ENCODE measurements at regions of chr3 and their contacts with region 1.

Region 1: GRCh38 chr3:50272911-50273693 is 4.2 kb downstream of the SEMA3B start:
- DNase-seq: peak; percentile 81 to 92 (median 89)
- H3K4me3 ChIP-seq: peak overlapping the region; percentile 0 to 69 (median 48)
- H3K27ac ChIP-seq: peak overlapping the region; percentile 65 to 100 (median 100)
- H3K27me3 ChIP-seq: peaks cover 0 to 35% (median 14%) of the 10 kb centered on the region in 45 donors
- CTCF ChIP-seq: peak; percentile 97 to 100 (median 99)

Region 2: GRCh38 chr3:50121416-50122032 is 151.6 kb before region 1 on chr3:
- intact Hi-C with region 1: loop called in 1 of 2 experiments (anchors 5 kb)
- DNase-seq: peak; percentile 57 to 83 (median 79)
- H3K4me3 ChIP-seq: no peak overlapping the region
- H3K27ac ChIP-seq: peak overlapping the region in 30 of 59 donors; percentile 3 to 75 (median 50)
- H3K27me3 ChIP-seq: no peaks in the 10 kb centered on the region
- CTCF ChIP-seq: peak; percentile 72 to 95 (median 88)

Region 3: DNA sequence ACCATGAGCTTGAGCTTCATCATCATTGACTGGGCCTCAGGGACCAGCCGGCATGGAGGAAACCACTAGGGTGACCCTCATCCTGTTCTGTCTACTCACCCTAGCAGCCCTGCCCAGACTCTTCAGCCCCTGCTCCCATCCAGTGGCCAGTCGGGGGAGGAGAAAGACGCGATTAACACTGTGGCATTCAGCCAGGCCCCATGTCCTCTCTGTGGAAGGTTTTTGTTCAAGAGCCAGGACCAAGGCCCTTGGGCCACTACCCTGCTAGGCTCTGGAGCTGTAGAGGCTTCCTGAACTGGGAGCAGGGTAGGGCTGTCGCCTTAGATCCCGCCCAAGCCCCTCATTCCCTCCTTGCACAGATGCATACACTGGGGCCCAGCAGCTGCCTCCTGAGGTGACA is 53.0 kb before region 1 on chr3:
- intact Hi-C with region 1: no loop called
- DNase-seq: no peak
- H3K4me3 ChIP-seq: no peak overlapping the region
- H3K27ac ChIP-seq: peak overlapping the region in 31 of 59 donors; percentile 4 to 80 (median 57)
- H3K27me3 ChIP-seq: no peaks in the 10 kb centered on the region
- CTCF ChIP-seq: no peak

Region 4: GRCh38 chr3:50259432-50260026 is 13.6 kb before region 1 on chr3:
- intact Hi-C with region 1: loop called in 1 of 2 experiments (anchors 2 kb)
- DNase-seq: no peak
- H3K4me3 ChIP-seq: peak overlapping the region in 52 of 59 donors; percentile 2 to 78 (median 68)
- H3K27ac ChIP-seq: peak overlapping the region; percentile 98 to 100 (median 100)
- H3K27me3 ChIP-seq: no peaks in the 10 kb centered on the region
- CTCF ChIP-seq: no peak

Region 5: GRCh38 chr3:50321336-50322114 is 48.4 kb after region 1 on chr3:
- intact Hi-C with region 1: loop called (anchors 1 kb)
- DNase-seq: peak; percentile 80 to 92 (median 90)
- H3K4me3 ChIP-seq: peak overlapping the region; percentile 61 to 98 (median 84)
- H3K27ac ChIP-seq: peak overlapping the region; percentile 81 to 100 (median 97)
- H3K27me3 ChIP-seq: no peaks in the 10 kb centered on the region
- CTCF ChIP-seq: peak in 46 of 56 donors; percentile 3 to 61 (median 40)